ENCODE measurements at regions of chr16 and their contacts with region 1.

Region 1: DNA sequence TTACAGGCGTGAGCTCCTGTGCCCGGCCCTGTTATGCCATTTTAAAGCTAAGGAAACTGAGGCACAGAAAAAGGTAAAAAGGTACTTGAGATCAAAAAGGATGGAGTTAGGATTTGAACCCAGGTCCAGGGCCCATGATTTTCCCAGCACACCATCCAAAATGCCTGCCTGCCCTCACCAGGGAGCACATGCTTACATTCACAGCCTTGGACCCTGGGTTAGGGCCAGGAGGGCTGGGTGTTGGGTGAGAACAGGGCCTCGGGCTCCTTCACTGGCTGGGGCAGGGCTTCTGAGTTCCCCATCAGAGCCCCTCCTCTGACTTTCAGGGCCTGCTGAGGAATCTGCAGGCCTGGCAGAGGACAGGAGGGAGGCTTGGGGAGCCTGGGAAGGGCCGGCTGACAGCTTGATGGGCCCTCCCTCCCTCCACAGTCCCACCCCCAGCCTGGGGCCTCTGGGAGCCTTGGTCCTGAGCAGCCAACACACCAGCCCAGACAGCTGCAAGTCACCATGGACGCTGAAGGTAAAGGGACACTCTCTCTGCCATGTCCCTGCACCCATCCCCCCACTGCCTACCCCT is at the start of gene QPRT:
- DNase-seq: no peak
- ATAC-seq: peak; percentile 37
- H3K4me3 Mint-ChIP-seq: peak within 1 kb of the TSS; percentile 61
- H3K27ac Mint-ChIP-seq: peak within 1 kb of the TSS; percentile 77
- H3K4me1 Mint-ChIP-seq: peaks cover 30% of the 10 kb centered on the region
- H3K27me3 Mint-ChIP-seq: no peaks in the 10 kb centered on the region
- total RNA-seq, gene QPRT: 13.3 to 15.7 TPM

Region 2: DNA sequence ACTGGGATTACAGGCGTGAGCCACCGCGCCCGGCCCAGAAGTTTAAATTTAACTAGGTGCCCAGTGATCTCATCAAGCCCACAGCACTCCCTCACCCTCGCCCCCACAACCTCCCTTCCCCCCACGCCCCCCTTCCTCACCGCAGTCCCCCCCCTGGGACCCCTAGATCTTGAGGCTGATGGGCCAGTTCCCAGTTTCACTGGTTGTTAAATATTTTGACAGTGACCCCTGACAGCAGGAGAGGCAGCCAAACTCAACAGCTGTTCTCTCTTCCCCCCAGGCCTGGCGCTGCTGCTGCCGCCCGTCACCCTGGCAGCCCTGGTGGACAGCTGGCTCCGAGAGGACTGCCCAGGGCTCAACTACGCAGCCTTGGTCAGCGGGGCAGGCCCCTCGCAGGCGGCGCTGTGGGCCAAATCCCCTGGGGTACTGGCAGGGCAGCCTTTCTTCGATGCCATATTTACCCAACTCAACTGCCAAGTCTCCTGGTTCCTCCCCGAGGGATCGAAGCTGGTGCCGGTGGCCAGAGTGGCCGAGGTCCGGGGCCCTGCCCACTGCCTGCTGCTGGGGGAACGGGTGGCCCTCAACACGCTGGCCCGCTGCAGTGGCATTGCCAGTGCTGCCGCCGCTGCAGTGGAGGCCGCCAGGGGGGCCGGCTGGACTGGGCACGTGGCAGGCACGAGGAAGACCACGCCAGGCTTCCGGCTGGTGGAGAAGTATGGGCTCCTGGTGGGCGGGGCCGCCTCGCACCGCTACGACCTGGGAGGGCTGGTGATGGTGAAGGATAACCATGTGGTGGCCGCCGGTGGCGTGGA is 15.8 kb after region 1 on chr16:
- CTCF ChIA-PET with region 1: interaction called, 12 read pairs
- DNase-seq: no peak
- ATAC-seq: no peak
- H3K4me3 Mint-ChIP-seq: no peak overlapping the region
- H3K27ac Mint-ChIP-seq: no peak overlapping the region
- H3K4me1 Mint-ChIP-seq: peaks cover 10% of the 10 kb centered on the region
- H3K27me3 Mint-ChIP-seq: no peaks in the 10 kb centered on the region

Region 3: GRCh38 chr16:29710227-29711219 is 31.7 kb after region 1 on chr16:
- CTCF ChIA-PET with region 1: no interaction called
- DNase-seq: peak; percentile 63
- ATAC-seq: peak; percentile 98
- H3K4me3 Mint-ChIP-seq: no peak overlapping the region
- H3K27ac Mint-ChIP-seq: no peak overlapping the region
- H3K4me1 Mint-ChIP-seq: peaks cover 10% of the 10 kb centered on the region
- H3K27me3 Mint-ChIP-seq: peaks cover 4% of the 10 kb centered on the region

Region 4: DNA sequence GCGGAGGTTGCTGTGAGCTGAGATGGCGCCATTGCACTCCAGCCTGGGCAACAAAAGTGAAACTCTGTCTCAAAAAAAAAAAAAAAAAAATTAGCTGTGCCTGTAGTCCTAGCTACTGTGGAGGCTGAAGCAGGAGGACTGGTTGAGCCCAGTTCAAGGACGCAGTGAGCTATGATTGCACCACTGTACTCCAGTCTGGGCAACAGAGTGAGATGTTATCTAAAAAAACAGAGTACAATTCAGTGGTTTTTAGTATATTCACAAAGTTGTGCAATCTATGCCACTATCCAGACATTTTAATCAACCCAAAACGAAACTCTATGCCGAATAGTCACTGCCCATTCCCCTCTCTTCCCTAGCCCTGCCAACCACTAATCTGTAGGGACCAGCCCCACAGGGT is 41.9 kb after region 1 on chr16:
- CTCF ChIA-PET with region 1: no interaction called
- DNase-seq: no peak
- ATAC-seq: no peak
- H3K4me3 Mint-ChIP-seq: no peak overlapping the region
- H3K27ac Mint-ChIP-seq: no peak overlapping the region
- H3K4me1 Mint-ChIP-seq: peaks cover 8% of the 10 kb centered on the region
- H3K27me3 Mint-ChIP-seq: no peaks in the 10 kb centered on the region

Region 5: DNA sequence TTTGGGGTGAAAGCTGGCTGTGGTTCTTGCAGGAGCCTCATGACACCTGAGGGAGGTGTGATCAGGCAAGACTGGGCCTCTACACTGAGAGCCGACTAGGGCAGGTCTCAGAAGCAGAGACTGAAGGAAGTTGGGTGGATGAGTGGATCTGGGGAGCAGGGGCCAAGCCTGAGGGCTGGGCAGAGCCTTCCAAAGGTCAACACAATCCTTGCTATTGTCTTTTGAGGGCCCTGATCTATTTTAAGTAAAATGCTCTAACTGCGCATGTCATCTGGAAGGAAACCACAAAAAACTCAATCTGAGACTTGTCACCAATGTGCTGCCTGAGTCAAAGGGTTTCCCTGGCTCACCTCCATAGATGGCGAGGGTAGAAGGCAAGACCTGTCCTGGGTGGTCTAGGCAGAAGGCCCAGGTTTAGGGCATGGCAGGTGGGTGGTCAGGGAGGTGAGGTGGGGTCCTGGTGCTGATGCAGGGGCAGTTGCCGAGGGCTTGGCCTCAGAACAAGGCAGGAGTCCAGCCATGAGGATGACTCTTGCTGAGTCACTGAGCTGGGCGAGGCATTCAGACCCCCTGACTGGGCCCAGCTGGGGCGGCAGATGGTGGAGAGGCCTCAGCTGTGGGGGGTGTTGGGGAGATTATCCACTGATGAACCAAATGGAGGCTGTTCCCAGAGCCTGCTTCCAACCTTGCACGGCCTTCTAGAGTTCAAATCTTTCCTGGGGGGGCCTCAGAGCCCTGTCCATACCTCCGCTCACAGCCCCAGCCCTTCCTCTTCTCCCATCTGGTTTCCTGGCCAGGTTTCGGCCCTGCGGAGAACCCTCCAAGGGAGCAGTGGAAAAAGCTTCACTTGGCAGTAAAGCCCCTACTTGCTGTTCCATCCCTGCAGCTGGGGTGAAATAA is 146.6 kb after region 1 on chr16:
- CTCF ChIA-PET with region 1: no interaction called
- DNase-seq: peak; percentile 77
- ATAC-seq: peak; percentile 65
- H3K4me3 Mint-ChIP-seq: peak overlapping the region; percentile 24
- H3K27ac Mint-ChIP-seq: peak overlapping the region; percentile 81
- H3K4me1 Mint-ChIP-seq: peaks cover 49% of the 10 kb centered on the region
- H3K27me3 Mint-ChIP-seq: no peaks in the 10 kb centered on the region